ENCODE measurements at regions of chr19 and their contacts with region 1.

Region 1: GRCh38 chr19:2161688-2162053 is 2.1 kb upstream of the DOT1L start:
- DNase-seq: no peak
- ATAC-seq: no peak
- H3K4me3 ChIP-seq: no peak overlapping the region
- H3K27ac ChIP-seq: no peak overlapping the region
- H3K4me1 ChIP-seq: peaks cover 11 to 32% (median 25%) of the 10 kb centered on the region in 9 donors
- H3K27me3 ChIP-seq: no peaks in the 10 kb centered on the region
- CTCF ChIP-seq: no peak

Region 2: DNA sequence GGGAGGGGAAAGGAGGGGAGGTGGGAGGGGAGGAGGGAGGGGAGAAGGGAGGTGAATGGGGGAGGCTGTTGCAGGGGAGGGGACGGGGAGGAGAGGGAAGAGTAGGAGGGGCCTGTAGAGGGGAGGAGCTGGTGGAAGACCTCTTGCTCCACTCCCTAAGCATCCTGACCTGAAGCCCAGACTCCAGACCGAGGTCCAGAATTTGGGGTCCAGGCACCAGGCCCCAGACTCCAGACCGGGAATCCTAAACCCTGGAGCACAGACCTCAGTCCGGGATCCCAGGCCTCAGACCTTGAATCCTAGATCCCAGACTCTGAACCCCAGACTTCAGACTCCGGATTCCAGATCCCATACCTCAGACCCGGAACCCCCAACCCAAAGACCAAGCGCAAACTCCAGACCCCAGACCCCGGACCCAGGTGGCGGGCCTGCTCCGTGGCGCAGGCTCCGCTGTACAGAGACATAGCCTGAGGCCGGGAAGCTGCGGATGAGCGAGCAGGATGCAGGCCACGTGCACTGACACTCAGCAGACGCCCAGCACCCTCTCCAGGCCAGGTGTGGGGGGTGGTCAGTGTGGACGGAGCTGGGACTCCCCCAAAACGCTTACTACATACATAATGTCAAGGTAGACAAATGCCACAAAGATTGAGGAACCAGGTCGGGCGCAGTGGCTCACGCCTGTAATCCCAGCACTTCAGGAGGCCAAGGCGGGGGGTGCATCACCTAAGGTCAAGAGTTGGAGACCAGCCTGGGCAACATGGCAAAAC is 145.4 kb before region 1 on chr19:
- intact Hi-C with region 1: no loop called
- DNase-seq: peak; percentile 66 to 85
- ATAC-seq: peak; percentile 68 to 91 (median 86)
- H3K4me3 ChIP-seq: peak overlapping the region in 8 of 10 donors; percentile 4 to 49 (median 42)
- H3K27ac ChIP-seq: peak overlapping the region in 8 of 10 donors; percentile 4 to 68 (median 50)
- H3K4me1 ChIP-seq: peaks cover 4 to 24% (median 9%) of the 10 kb centered on the region in 9 donors
- H3K27me3 ChIP-seq: no peaks in the 10 kb centered on the region
- CTCF ChIP-seq: no peak

Region 3: GRCh38 chr19:2315818-2316353 is 154.2 kb after region 1 on chr19:
- intact Hi-C with region 1: loop called in 5 of 10 experiments (anchors 1 to 5 kb)
- DNase-seq: peak; percentile 71 to 72
- ATAC-seq: peak; percentile 89 to 94 (median 93)
- H3K4me3 ChIP-seq: no peak overlapping the region
- H3K27ac ChIP-seq: peak overlapping the region in 1 of 10 donors; percentile 70
- H3K4me1 ChIP-seq: peaks cover 0 to 22% (median 6%) of the 10 kb centered on the region in 9 donors
- H3K27me3 ChIP-seq: peaks cover 0 to 27% (median 26%) of the 10 kb centered on the region in 7 donors
- CTCF ChIP-seq: peak; percentile 31 to 76 (median 69)

Measured in heart right ventricle (tissue), 16 donors.